ENCODE measurements at regions of chr10 and their contacts with region 1.

Region 1: DNA sequence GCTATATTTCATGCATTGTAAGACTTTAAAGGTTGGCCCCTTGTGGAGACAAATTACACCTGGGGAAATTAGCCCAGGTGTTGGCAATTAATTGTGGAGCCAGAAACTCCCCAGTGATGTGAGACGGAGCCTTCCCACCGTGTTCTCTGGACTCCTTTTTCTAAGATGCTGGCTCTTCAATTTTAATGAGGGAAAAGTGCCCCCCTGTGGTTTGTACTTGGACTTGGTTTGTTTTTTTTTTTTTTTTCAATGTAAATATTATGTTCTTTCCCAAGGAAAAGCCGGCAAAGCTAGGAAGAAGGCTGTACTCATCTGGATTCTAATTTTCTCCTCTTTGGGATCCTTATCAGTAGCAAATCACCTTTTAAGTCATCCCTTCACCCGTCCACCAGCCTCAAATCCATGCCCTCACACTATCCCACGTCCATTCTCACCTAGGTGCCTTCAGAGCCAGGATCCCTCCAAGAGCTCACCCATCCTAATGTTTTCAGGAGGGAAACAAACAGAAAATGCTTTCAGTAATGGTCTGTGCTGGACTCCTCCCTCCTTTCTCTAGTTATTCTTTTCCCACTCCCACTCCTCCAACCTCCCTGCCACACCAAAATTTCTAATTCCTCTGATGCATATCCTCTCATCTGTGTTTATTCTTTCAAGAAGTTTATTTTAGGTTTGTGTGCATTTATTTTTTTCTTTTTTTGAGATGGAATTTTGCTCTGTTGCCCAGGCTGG is 20.4 kb upstream of the ST8SIA6 start:
- DNase-seq: peak; percentile 40
- H3K4me3 ChIP-seq: no peak overlapping the region
- H3K27ac ChIP-seq: no peak overlapping the region
- H3K4me1 ChIP-seq: peaks cover 12% of the 10 kb centered on the region
- H3K27me3 ChIP-seq: no peaks in the 10 kb centered on the region
- CTCF ChIP-seq: peak in 1 of 2 donors; percentile 22
- POLR2A ChIP-seq: no peak

Region 2: GRCh38 chr10:16545116-16545736 is 929.5 kb before region 1 on chr10:
- CTCF ChIA-PET with region 1: no interaction called
- POLR2A ChIA-PET with region 1: no interaction called
- dilution Hi-C with region 1: no loop called
- intact Hi-C with region 1: no loop called
- DNase-seq: peak; percentile 43
- H3K4me3 ChIP-seq: no peak overlapping the region
- H3K27ac ChIP-seq: no peak overlapping the region
- H3K4me1 ChIP-seq: no peaks in the 10 kb centered on the region
- H3K27me3 ChIP-seq: peaks cover 0 to 1% of the 10 kb centered on the region in 2 experiments
- CTCF ChIP-seq: peak; percentile 63 to 67
- POLR2A ChIP-seq: no peak

Region 3: DNA sequence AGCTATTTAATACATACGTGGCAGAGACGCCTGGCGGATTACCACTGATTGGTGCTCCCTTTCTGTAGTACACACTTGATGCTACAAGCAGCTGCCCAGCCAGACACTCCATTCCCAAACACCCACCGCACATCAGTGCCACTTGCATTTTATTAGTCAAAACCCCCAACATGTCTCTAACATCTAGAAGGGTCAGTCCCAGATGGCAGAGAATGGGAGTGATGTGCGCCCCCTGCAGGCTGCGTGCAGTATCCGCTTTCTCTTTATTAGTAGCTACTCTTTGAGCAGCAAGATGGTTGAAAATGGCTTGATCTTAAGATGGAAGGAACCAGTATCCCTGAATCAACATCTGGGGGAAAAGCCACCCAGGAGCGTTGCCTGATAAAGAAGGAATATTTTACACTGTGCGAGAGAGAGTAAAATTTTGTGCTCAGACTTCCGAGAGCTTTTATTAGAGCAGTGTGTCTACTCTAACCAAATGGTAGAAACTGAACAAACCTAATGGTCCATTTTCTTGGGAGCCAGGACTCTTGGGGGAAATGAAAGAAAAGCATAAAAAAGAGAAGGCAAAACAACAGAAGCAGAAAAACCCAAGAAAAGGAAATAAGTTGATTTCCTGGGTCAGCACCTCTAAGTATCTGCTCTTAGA is 98.7 kb before region 1 on chr10:
- CTCF ChIA-PET with region 1: no interaction called
- POLR2A ChIA-PET with region 1: no interaction called
- dilution Hi-C with region 1: no loop called
- intact Hi-C with region 1: no loop called
- DNase-seq: peak; percentile 2
- H3K4me3 ChIP-seq: no peak overlapping the region
- H3K27ac ChIP-seq: no peak overlapping the region
- H3K4me1 ChIP-seq: no peaks in the 10 kb centered on the region
- H3K27me3 ChIP-seq: no peaks in the 10 kb centered on the region
- CTCF ChIP-seq: peak; percentile 41 to 71
- POLR2A ChIP-seq: no peak

Region 4: GRCh38 chr10:17454161-17455014 is 20.4 kb before region 1 on chr10 and contains the start of gene ST8SIA6:
- CTCF ChIA-PET with region 1: interaction called, 3 read pairs
- POLR2A ChIA-PET with region 1: no interaction called
- dilution Hi-C with region 1: no loop called
- intact Hi-C with region 1: loop called (anchors 2 kb)
- DNase-seq: peak; percentile 66
- H3K4me3 ChIP-seq: peak within 1 kb of the TSS; percentile 37 to 69 (median 55)
- H3K27ac ChIP-seq: no peak within 1 kb of the TSS
- H3K4me1 ChIP-seq: peaks cover 9% of the 10 kb centered on the region
- H3K27me3 ChIP-seq: no peaks in the 10 kb centered on the region
- CTCF ChIP-seq: no peak
- POLR2A ChIP-seq: no peak
- total RNA-seq, gene ST8SIA6: 0.35 and 0.51 TPM in 2 replicates

Region 5: DNA sequence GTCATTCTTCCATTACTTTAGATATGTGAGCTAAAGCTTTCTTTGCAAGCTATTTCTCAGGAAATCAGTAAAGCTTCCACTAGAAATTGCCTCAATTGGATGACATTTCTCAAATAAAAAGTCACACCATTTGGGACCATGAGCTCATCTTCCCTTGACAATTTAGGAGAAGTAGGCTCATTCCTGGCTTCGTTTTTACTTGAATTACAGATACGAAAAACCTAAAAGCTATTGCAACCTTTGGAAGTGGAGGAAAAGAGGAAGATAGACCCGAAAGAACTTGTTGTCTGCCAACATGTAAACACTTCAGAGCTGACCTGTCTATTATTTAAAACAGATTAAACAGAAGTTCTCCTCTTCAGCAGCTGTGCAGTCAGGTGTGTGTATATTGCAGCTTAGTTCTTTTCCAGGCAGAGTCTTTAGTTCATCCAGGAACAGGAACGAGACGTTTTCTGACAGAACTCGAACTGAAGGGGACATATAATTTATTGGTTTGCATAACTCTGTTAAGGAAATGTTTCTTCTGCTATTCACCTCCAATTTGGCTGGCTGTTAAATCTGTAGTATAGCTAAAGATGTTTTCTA is 22.8 kb after region 1 on chr10:
- CTCF ChIA-PET with region 1: no interaction called
- POLR2A ChIA-PET with region 1: no interaction called
- dilution Hi-C with region 1: no loop called
- intact Hi-C with region 1: no loop called
- DNase-seq: no peak
- H3K4me3 ChIP-seq: no peak overlapping the region
- H3K27ac ChIP-seq: no peak overlapping the region
- H3K4me1 ChIP-seq: no peaks in the 10 kb centered on the region
- H3K27me3 ChIP-seq: no peaks in the 10 kb centered on the region
- CTCF ChIP-seq: no peak
- POLR2A ChIP-seq: no peak

Region 6: DNA sequence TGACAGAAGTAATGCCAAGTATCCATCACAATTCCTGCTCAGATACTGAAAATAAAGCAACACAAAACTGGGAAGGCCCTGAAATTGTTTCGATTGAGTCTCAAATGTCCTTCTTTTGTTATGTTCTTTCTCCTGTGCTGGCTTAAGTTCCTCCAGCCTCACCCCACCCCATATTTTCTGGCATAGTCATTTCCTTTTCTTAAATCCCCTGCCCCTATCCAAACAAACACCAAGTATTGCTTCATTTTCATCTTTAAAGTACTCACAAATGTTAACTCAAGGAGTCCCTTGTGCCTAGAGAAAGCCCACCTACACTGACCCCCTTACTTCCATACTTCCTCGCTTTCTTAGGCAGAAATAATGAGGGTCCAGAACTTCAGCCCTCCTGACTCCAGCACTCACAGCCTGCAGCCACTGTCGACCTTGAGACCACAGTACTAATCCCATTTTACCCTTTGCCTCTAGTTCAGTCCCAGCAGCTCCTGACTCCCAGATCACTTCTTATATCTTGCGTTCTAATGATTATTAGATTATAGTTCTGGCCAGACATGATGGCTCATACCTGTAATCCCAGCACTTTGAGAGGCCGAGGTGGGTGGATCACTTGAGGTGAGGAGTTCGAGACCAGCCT is 52.9 kb after region 1 on chr10:
- CTCF ChIA-PET with region 1: no interaction called
- POLR2A ChIA-PET with region 1: no interaction called
- dilution Hi-C with region 1: no loop called
- intact Hi-C with region 1: loop called (anchors 1 kb)
- DNase-seq: peak; percentile 87
- H3K4me3 ChIP-seq: no peak overlapping the region
- H3K27ac ChIP-seq: peak overlapping the region; percentile 98
- H3K4me1 ChIP-seq: peaks cover 23% of the 10 kb centered on the region
- H3K27me3 ChIP-seq: no peaks in the 10 kb centered on the region
- CTCF ChIP-seq: no peak
- POLR2A ChIP-seq: peak; percentile 21

Region 7: GRCh38 chr10:17578603-17579002 is 103.8 kb after region 1 on chr10:
- CTCF ChIA-PET with region 1: no interaction called
- POLR2A ChIA-PET with region 1: no interaction called
- dilution Hi-C with region 1: no loop called
- intact Hi-C with region 1: loop called (anchors 5 kb)
- DNase-seq: peak; percentile 97
- H3K4me3 ChIP-seq: no peak overlapping the region
- H3K27ac ChIP-seq: no peak overlapping the region
- H3K4me1 ChIP-seq: no peaks in the 10 kb centered on the region
- H3K27me3 ChIP-seq: no peaks in the 10 kb centered on the region
- CTCF ChIP-seq: no peak
- POLR2A ChIP-seq: peak; percentile 66